Activated T-helper 1 cell treated with anti-CD3 and anti-CD28 coated beads, Interleukin-12 subunit alpha, Interleukin-12 subunit beta, Interleukin-2, Interleukin-4 antibody, amounts not matched to agents 30 ng/mL and 10 ng/mL and 1 ng/mL, durations not matched to agents 14 hours and 24 hours and 36 hours (primary cell): ENCODE measurements at regions of chr5 and their contacts with region 1.

Region 1: GRCh38 chr5:178232124-178232919 is at the start of gene PHYKPL:
- DNase-seq: peak; percentile 75
- H3K4me3 Mint-ChIP-seq: peak within 1 kb of the TSS; percentile 90
- H3K27ac Mint-ChIP-seq: peak within 1 kb of the TSS; percentile 86
- H3K4me1 Mint-ChIP-seq: peaks cover 66% of the 10 kb centered on the region
- H3K27me3 Mint-ChIP-seq: no peaks in the 10 kb centered on the region
- total RNA-seq, gene PHYKPL: 84.4 and 86.7 TPM in 2 replicates

Region 2: GRCh38 chr5:178204182-178204894 is 28.0 kb before region 1 on chr5 and contains the start of gene HNRNPAB:
- intact Hi-C with region 1: loop called (anchors 1 kb)
- DNase-seq: peak; percentile 94
- H3K4me3 Mint-ChIP-seq: peak within 1 kb of the TSS; percentile 99
- H3K27ac Mint-ChIP-seq: peak within 1 kb of the TSS; percentile 100
- H3K4me1 Mint-ChIP-seq: peaks cover 35% of the 10 kb centered on the region
- H3K27me3 Mint-ChIP-seq: peaks cover 2% of the 10 kb centered on the region
- total RNA-seq, gene HNRNPAB: 459 and 472 TPM in 2 replicates

Region 3: DNA sequence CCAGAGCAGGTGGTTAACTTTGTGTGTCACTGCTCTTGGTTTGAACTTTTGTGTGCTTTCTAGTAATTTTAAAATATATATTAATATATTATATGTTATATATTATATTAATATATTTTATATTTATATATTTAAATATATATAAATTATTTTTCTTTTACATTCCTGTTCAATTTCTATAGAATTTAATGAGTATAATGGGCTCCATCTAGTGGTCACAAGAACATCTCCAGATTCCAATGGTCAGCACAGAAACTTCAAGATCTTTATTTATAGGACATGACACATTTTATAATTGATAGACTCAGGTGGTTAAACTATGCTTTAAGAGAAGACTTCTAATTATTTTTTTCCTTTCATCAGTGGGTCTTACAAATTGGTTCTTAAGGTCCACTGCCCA is 318.7 kb after region 1 on chr5:
- intact Hi-C with region 1: loop called (anchors 1 kb)
- DNase-seq: no peak
- H3K4me3 Mint-ChIP-seq: no peak overlapping the region
- H3K27ac Mint-ChIP-seq: no peak overlapping the region
- H3K4me1 Mint-ChIP-seq: no peaks in the 10 kb centered on the region
- H3K27me3 Mint-ChIP-seq: peaks cover 3% of the 10 kb centered on the region

Region 4: DNA sequence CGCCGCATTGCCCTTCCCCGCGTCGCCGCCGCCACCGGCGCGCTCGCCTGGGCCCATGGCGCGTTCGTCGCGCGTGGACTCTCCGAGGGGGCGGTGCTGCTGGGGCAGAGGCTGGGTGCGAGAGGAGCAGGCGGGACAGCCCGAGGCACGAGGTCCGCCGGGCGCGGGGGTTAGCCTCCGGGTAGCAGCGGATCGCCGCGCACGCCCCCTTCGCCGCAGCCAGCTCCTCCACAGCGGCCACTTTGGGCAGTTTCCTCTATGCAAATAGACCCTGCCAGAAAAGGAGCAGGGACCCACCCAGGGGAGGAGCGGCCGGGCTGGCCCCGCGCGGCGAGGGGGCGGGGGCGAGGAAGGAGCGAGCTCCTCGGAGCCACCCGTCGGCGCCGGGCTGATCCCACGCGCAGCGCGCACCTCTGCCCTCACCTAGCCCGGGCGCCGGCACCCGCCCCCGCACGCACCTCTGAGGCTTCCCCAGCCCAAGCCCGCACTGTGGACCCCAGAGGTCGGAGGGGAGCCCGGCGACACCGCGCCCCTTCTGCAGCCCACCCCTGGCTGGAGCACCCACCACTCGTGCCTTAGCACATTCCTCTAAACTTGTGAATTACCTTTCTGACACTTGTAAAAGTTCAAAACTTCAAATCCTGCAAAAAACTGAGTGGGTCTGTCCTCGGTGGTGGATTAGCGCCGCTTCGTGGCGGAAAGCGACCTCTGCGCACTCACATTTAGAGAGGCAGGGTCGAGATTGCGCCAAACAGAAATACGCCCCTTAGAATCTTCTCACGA is 358.0 kb after region 1 on chr5 and contains the start of gene COL23A1:
- intact Hi-C with region 1: loop called (anchors 1 kb)
- DNase-seq: peak; percentile 31
- H3K4me3 Mint-ChIP-seq: peak within 1 kb of the TSS; percentile 75
- H3K27ac Mint-ChIP-seq: no peak within 1 kb of the TSS
- H3K4me1 Mint-ChIP-seq: peaks cover 9% of the 10 kb centered on the region
- H3K27me3 Mint-ChIP-seq: peaks cover 37% of the 10 kb centered on the region
- total RNA-seq, gene COL23A1: not detected in 2 replicates

Region 5: DNA sequence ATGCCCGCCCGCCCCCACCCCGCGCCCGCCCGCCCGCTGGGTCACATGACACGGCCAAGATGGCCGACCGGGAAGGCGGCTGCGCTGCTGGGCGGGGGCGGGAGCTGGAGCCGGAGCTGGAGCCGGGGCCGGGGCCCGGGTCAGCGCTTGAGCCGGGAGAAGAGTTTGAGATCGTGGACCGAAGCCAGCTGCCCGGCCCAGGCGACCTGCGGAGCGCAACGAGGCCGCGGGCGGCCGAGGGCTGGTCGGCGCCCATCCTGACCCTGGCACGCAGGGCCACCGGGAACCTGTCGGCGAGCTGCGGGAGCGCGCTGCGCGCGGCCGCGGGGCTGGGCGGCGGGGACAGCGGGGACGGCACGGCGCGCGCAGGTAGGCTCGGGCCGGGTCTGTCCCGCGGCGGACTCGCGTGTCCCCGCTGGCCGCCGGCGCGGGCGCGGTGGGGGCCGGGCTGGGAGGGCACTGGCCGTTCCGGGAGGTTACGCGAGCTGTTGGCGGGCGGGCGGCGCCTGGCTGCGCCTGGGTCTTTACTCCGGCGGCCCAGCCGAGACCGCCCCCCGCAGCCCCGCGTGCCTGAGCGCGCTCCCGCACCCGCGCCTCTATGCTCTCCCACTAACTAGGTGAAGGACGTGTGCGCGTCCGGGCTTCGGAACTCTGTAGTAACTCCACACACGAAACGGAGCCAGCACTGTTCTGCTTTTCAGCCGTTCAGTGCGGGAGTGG is 1318.3 kb after region 1 on chr5 and contains the start of gene RUFY1:
- intact Hi-C with region 1: loop called (anchors 2 kb)
- DNase-seq: peak; percentile 83
- H3K4me3 Mint-ChIP-seq: peak within 1 kb of the TSS; percentile 99
- H3K27ac Mint-ChIP-seq: peak within 1 kb of the TSS; percentile 99
- H3K4me1 Mint-ChIP-seq: peaks cover 28% of the 10 kb centered on the region
- H3K27me3 Mint-ChIP-seq: peaks cover 2% of the 10 kb centered on the region
- total RNA-seq, gene RUFY1: 37.0 and 38.3 TPM in 2 replicates